ENCODE measurements at regions of chr7 and their contacts with region 1.

Region 1: GRCh38 chr7:43582503-43583423 is at the start of gene STK17A:
- DNase-seq: peak; percentile 99
- H3K4me3 ChIP-seq: peak within 1 kb of the TSS; percentile 70 to 98
- H3K27ac ChIP-seq: peak within 1 kb of the TSS; percentile 83 to 88
- H3K4me1 ChIP-seq: peaks cover 15 to 20% of the 10 kb centered on the region in 2 experiments; a peak in 3 of 4 replicates
- H3K27me3 ChIP-seq: no peaks in the 10 kb centered on the region
- CTCF ChIP-seq: peak; percentile 100
- EP300 ChIP-seq: peak in 1 of 2 experiments; percentile 3; a peak in 1 of 4 replicates
- RAD21 ChIP-seq: peak; percentile 96
- polyA plus RNA-seq, gene STK17A: 47.8 and 52.0 TPM in 2 replicates

Region 2: DNA sequence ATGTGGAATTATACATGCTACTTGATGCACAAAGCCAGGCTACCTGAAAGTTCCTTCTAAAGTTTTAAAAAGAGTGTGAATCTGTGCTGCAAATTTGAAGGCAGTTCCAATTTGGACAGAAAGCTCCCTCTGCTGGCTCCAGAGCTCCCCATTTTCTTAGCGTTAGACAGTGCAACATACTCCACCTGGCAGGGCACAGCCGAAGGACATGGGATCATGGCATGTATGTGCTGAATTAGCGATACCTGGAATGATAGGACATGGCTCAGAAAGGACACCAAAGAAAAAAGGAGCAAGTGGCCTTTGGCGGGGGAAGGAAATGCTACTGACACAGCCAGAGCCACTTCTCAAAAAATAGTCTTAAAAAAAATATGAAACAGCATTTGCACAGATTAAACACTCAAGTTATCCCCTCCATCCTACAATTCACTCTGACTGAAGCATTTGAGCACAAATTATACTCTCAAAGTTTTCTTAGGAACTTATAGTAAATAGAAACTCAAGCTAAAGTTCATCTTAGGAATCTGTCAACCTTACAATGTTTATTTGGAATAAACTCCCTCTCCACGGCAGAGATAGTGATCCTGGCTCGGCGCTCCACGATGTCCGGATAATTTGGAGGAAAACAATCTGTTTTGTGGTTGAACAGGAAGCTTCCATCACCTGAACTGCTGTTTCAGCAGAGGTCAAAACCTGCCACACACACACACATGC is 750.9 kb before region 1 on chr7:
- CTCF ChIA-PET with region 1: no interaction called
- POLR2A ChIA-PET with region 1: no interaction called
- DNase-seq: no peak
- H3K4me3 ChIP-seq: peak overlapping the region in 1 of 2 experiments; percentile 24; a peak in 1 of 4 replicates
- H3K27ac ChIP-seq: no peak overlapping the region
- H3K4me1 ChIP-seq: no peaks in the 10 kb centered on the region
- H3K27me3 ChIP-seq: peaks cover 48% of the 10 kb centered on the region
- CTCF ChIP-seq: peak; percentile 67
- EP300 ChIP-seq: no peak
- RAD21 ChIP-seq: peak; percentile 52

Region 3: DNA sequence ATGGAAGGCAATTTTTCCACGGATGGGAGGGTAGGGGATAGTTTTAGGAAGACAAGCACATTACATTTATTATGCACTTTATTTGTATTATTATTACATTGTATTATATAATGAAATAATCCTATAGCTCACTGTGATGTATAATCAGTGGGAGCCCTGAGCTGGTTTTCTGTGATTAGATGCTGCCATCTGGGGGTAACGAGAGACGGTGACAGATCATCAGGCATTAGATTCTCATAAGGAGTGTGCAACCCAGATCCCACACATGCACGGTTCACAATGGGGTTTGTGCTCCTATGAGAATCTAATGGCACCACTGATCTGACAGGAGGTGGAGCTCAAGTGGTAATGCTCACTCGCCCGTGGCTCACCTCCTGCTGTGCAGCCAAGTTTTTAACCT is 103.7 kb before region 1 on chr7:
- CTCF ChIA-PET with region 1: interaction called, 13 read pairs
- POLR2A ChIA-PET with region 1: no interaction called
- DNase-seq: no peak
- H3K4me3 ChIP-seq: no peak overlapping the region
- H3K27ac ChIP-seq: no peak overlapping the region
- H3K4me1 ChIP-seq: no peaks in the 10 kb centered on the region; a peak in 1 of 4 replicates
- H3K27me3 ChIP-seq: no peaks in the 10 kb centered on the region
- CTCF ChIP-seq: peak; percentile 19; the same call in 1 of the 2 replicates
- EP300 ChIP-seq: no peak
- RAD21 ChIP-seq: peak; percentile 21; the same call in 1 of the 2 replicates

Region 4: DNA sequence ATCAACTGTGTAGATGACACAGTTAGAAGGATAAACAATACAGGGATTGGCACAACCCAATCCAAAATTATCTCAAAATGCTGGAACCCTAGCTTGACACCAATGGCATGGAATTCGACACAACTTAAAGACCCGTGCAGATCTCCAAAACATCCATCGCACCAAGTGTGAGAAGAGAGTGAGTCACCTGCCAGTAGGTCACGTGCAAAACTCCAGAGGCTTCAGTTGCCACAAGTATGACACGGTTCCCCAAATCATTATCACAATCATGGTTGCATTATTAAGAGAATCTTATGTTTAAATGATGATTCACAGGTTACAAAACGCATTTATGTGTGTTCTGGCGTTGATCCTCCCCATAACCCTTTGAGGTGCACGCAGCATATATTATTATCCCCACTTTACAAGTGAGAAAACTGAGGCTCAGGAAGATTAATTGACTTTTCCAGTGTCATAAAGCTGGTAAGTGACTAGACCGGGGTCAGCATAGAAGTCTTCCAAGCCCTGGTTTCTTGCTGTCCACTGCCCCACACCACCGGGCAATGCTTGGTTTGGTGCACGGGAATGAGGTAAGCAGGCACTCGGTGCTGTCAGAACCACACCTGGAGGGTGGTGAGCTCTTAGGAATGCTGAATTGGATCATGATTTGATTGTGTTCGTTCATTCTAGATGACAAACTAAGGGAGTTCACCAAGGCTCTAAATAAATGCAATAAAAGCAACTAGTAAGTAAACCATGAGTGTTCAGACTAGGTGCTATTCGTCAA is 23.4 kb before region 1 on chr7:
- CTCF ChIA-PET with region 1: interaction called, 81 read pairs
- POLR2A ChIA-PET with region 1: no interaction called
- DNase-seq: no peak
- H3K4me3 ChIP-seq: no peak overlapping the region
- H3K27ac ChIP-seq: no peak overlapping the region
- H3K4me1 ChIP-seq: no peaks in the 10 kb centered on the region
- H3K27me3 ChIP-seq: peaks cover 36% of the 10 kb centered on the region
- CTCF ChIP-seq: no peak
- EP300 ChIP-seq: no peak
- RAD21 ChIP-seq: no peak

Region 5: DNA sequence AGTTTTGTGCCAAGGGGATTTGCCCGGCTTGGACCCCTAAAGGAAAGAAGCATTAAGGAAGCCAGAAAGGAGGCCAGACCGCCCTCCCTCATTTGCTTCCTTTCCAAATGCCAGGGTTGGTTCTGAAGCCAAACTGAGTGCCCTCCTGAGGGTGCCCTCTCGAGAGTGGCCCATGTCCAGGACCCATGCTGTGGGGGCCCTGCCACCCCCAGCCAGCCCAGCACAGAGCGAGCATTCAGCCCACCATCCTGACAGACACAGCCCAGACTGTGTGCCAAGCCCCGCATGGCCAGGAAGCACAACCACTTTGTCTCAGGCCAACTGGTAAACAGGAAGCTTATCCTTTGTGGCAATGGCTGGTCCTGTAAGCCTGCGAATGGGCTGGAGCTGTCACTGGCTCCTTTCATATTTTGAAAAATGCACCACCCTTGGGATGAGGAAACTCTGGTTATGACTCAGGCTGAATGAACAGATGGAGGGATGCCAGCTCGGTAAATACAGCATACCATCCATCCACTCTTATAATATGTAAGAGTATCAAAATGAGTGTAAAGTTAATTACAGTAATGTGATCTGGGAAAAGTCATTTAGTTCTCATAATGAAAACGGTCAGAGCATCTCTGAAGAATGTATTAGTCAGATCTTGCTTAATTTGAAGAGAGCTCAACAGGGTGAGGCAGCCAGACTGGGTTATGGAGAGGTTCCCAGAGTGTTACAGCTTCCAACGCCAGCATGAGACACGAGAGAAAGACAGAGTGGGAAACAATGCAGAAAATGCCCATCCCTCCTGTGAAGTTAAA is 65.1 kb after region 1 on chr7:
- CTCF ChIA-PET with region 1: interaction called, 45 read pairs
- POLR2A ChIA-PET with region 1: interaction called, 5 read pairs
- DNase-seq: peak; percentile 59
- H3K4me3 ChIP-seq: peak overlapping the region; percentile 20 to 44; a peak in 3 of 4 replicates
- H3K27ac ChIP-seq: peak overlapping the region; percentile 98 to 100
- H3K4me1 ChIP-seq: peaks cover 65 to 68% of the 10 kb centered on the region in 2 experiments
- H3K27me3 ChIP-seq: no peaks in the 10 kb centered on the region
- CTCF ChIP-seq: no peak
- EP300 ChIP-seq: peak; percentile 96 to 100
- RAD21 ChIP-seq: no peak

Region 6: DNA sequence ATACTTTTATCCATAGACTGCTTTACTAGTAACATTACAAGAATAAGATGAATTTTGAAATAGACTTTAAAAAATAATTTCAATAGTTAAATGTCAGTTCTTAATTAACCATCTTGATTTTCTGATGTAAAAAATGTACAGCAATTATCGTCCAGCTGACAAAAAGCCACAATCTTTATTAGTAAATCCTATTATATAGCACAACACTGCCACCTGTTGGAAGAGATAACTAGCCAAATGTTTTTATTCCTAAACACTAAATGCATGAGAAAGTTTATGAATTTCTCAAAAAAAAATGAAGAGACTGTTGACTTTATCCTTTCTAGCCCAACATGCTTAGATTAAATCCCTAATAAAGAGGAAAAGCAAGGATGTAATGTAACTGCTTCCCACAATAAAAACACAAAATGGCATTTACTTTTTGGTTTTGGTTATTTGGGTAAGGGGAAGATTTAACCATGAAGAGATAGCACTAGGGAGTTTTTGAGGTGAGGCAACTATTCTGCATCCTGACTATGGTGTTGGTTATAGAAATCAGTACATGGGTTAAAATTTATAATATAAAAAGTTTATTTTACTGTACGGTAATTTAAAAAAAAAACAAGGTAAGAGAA is 138.5 kb after region 1 on chr7:
- CTCF ChIA-PET with region 1: interaction called, 144 read pairs
- POLR2A ChIA-PET with region 1: interaction called, 3 read pairs
- DNase-seq: peak; percentile 45
- H3K4me3 ChIP-seq: no peak overlapping the region; a peak in 1 of 4 replicates
- H3K27ac ChIP-seq: no peak overlapping the region; a peak in 1 of 4 replicates
- H3K4me1 ChIP-seq: no peaks in the 10 kb centered on the region; a peak in 1 of 4 replicates
- H3K27me3 ChIP-seq: no peaks in the 10 kb centered on the region
- CTCF ChIP-seq: peak; percentile 99
- EP300 ChIP-seq: no peak
- RAD21 ChIP-seq: peak; percentile 79

Region 7: DNA sequence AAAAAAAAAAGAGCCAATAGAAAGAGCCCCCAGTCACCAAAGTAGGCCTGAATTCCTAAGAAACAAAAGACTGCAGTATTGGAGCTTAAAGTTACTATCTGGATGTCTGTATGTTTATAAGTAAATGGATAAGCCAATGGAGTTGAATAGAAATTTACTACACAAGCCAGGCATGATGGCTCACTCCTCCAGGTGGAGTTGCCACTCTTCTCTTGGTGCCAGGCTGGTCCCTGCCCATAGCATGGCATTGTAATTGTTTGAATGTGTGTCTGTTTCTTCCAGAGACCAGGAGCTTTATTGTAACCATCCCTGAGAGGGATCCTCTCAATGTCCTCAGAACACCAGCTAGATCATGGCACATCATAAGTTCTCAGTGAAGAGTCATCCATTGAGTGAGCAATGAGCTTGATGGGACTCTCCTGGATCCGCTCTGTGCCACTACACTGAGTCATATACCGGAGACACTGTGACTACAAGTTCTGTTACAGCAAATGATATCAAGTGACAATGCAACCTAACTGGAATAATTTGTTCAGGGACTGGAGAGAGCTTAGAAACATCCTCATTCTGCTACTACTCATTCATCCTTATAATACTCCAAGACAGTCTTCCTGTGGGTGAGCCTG is 261.4 kb after region 1 on chr7:
- CTCF ChIA-PET with region 1: interaction called, 157 read pairs
- POLR2A ChIA-PET with region 1: no interaction called
- DNase-seq: no peak
- H3K4me3 ChIP-seq: no peak overlapping the region
- H3K27ac ChIP-seq: no peak overlapping the region
- H3K4me1 ChIP-seq: peaks cover 0 to 6% of the 10 kb centered on the region in 2 experiments; a peak in 1 of 4 replicates
- H3K27me3 ChIP-seq: no peaks in the 10 kb centered on the region
- CTCF ChIP-seq: no peak
- EP300 ChIP-seq: no peak
- RAD21 ChIP-seq: no peak